AG04450 (cell line): ENCODE measurements at regions of chr9 and their contacts with region 1.

Region 1: GRCh38 chr9:133144137-133144903 is 19.4 kb downstream of the GBGT1 start:
- DNase-seq: no peak
- H3K4me3 ChIP-seq: peak overlapping the region; percentile 49
- H3K27ac ChIP-seq: no peak overlapping the region
- H3K27me3 ChIP-seq: no peaks in the 10 kb centered on the region
- CTCF ChIP-seq: peak; percentile 86

Region 2: DNA sequence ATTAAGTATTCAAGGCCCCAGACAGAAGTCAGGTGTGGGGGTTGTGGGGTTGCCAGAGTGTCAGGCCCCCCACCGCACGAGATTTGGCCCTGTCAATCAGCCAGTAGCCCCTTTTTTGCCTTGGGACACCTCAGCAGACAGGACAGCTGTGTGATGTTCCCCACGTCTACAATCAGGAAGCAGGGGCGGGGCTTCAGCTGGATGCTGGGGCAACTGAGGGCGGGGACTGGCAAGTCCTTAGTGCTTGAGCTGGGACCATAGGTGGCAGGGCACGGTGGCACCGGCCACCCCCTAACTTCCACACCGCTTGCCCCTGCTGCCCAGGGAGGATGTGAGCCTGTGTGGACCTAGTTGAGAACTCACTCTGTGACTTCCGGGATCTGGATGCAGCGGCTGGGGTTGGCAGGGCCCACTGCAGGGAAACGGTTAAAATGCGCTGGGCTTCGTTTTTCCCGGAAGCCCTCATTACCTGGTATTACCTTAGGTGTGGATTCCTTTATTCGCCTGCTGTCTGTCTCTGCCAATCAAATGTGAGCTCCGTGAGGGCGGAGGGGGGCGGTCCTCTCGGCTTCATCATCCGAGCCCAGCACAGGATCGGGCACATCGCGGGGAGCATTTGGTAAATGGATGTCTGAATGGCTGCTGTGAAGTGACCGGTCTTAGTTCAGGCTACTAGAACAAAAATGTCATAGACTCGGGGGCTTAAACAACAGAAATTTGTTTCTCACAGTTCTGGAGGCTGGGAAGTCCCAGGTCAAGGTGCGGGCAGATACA is 121.0 kb before region 1 on chr9:
- CTCF ChIA-PET with region 1: interaction called, 14 read pairs
- POLR2A ChIA-PET with region 1: no interaction called
- DNase-seq: no peak
- H3K4me3 ChIP-seq: no peak overlapping the region
- H3K27ac ChIP-seq: no peak overlapping the region
- H3K27me3 ChIP-seq: no peaks in the 10 kb centered on the region
- CTCF ChIP-seq: no peak

Region 3: DNA sequence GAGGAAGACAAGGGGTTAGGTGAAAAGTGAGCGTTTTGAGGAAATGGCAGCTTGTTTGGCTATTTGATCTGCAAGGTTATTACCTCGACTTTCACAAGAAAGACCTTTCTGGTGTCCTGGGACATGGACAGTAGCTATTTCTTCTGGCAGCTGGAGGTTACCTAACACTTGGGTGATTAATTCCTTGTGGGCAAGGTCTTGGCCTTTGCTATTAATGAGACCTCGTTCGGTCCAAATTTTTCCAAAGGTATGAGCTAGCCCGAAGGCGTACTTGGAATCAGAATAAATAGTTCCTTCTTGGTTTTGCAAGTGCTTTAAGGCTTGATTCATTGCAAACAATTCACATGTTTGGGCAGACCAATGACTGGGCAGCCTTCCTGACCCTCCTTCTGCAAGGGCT is 108.7 kb before region 1 on chr9:
- CTCF ChIA-PET with region 1: interaction called, 25 read pairs
- POLR2A ChIA-PET with region 1: interaction called, 5 read pairs
- DNase-seq: no peak
- H3K4me3 ChIP-seq: no peak overlapping the region
- H3K27ac ChIP-seq: no peak overlapping the region
- H3K27me3 ChIP-seq: no peaks in the 10 kb centered on the region
- CTCF ChIP-seq: no peak

Region 4: GRCh38 chr9:133075925-133076630 is 68.2 kb before region 1 on chr9:
- CTCF ChIA-PET with region 1: interaction called, 11 read pairs
- POLR2A ChIA-PET with region 1: no interaction called
- DNase-seq: peak; percentile 53
- H3K4me3 ChIP-seq: no peak overlapping the region
- H3K27ac ChIP-seq: no peak overlapping the region
- H3K27me3 ChIP-seq: peaks cover 22% of the 10 kb centered on the region
- CTCF ChIP-seq: no peak

Region 5: DNA sequence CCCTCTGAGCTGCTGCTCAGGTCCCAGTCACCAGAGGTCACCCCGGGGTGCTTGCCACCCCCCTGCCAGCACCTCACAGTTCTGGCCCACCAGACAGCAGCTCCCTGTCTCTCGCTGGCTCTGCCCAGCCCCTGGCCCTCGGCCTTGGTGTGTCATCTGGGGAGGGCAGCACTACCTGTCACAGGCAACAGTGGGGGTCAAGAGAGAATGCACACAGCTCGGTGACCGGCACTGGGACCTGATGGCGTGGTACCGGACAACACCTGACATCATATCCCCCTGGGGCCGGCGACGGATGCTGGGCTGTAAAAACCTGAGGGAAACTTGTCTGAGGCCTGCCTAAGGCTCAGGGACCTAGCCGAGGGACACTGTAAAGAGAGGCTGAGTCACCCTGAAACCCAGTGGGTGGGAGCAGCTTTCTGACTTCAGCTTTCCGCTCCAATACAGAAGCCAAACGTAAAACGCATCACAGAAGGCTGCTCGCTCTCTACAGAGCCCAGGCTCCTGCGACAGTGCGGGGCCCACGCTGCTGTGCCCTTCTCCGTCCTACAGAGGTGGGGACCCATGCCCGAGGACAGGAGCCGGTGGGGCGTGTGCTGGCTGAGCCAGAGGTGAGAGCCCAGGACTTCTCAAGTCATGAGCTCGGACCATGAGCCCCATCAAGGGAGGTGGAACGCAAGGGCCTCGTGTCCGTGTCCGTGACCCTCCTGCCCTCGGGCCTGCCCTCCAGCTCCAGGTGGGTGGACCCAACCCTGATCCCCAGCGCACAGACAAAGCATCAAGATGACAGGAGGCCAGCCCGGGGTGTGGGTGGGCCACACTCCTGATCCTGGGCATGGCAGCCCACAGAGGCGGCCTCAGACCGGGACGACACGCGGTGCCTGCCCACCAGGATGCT is 28.6 kb before region 1 on chr9:
- CTCF ChIA-PET with region 1: interaction called, 264 read pairs
- POLR2A ChIA-PET with region 1: no interaction called
- DNase-seq: no peak
- H3K4me3 ChIP-seq: no peak overlapping the region
- H3K27ac ChIP-seq: no peak overlapping the region
- H3K27me3 ChIP-seq: no peaks in the 10 kb centered on the region
- CTCF ChIP-seq: no peak

Region 6: GRCh38 chr9:133157461-133157860 is 13.1 kb after region 1 on chr9:
- CTCF ChIA-PET with region 1: interaction called, 22 read pairs
- POLR2A ChIA-PET with region 1: interaction called, 5 read pairs
- DNase-seq: no peak
- H3K4me3 ChIP-seq: no peak overlapping the region
- H3K27ac ChIP-seq: no peak overlapping the region
- H3K27me3 ChIP-seq: no peaks in the 10 kb centered on the region
- CTCF ChIP-seq: no peak